Naive thymus-derived CD4-positive, alpha-beta T cell (primary cell): ENCODE measurements at regions of chr1 and their contacts with region 1.

Region 1: DNA sequence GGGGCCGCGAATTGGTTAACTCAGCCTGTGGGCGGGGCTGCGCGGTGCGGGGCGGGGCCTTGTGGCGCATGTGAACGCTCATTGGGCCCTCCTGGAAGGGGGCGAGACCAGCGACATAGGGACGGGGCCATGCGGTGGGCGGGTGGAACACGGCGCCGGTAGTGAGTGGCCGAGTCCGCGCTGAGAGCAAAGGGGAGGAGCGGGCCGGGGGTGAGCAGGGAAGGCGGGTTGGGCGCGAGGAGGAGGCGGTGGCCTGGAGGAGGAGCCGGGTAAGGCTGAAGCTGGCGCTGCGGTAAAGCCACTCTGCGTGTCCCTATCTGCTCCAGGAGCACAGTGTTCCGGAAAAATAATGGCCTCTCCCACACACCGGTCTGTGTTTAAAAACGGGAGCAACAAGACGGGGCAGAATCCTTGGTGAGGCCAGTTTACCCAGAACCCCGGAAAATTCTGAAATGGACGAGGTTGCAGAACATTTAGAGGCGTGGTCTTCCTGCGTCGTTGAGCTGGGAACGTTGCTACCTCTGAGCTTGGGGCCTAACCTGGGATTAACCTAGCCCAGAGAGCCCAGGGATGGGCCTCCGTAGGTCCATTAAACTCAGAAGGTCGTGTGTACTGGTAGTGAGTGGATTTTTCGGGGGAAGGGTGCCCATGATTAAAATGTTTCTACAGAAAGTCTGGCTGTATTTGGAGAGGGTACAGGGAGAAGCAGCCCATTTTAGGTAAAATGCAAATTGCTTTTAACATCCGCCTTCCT is 533 bp upstream of the CTNNBIP1 start:
- DNase-seq: peak; percentile 99 to 100 (median 100)
- ATAC-seq: peak; percentile 95
- H3K4me3 ChIP-seq: peak overlapping the region; percentile 89
- H3K4me3 Mint-ChIP-seq: peak overlapping the region; percentile 88 to 98 (median 96)
- H3K27ac ChIP-seq: peak overlapping the region; percentile 75
- H3K27ac Mint-ChIP-seq: peak overlapping the region; percentile 84 to 98 (median 97)
- H3K4me1 ChIP-seq: peaks cover 13 to 15% of the 10 kb centered on the region in 2 donors
- H3K4me1 Mint-ChIP-seq: peaks cover 25 to 43% (median 31%) of the 10 kb centered on the region in 7 donors
- H3K27me3 ChIP-seq: no peaks in the 10 kb centered on the region
- H3K27me3 Mint-ChIP-seq: peaks cover 0 to 10% (median 0%) of the 10 kb centered on the region in 5 donors

Region 2: DNA sequence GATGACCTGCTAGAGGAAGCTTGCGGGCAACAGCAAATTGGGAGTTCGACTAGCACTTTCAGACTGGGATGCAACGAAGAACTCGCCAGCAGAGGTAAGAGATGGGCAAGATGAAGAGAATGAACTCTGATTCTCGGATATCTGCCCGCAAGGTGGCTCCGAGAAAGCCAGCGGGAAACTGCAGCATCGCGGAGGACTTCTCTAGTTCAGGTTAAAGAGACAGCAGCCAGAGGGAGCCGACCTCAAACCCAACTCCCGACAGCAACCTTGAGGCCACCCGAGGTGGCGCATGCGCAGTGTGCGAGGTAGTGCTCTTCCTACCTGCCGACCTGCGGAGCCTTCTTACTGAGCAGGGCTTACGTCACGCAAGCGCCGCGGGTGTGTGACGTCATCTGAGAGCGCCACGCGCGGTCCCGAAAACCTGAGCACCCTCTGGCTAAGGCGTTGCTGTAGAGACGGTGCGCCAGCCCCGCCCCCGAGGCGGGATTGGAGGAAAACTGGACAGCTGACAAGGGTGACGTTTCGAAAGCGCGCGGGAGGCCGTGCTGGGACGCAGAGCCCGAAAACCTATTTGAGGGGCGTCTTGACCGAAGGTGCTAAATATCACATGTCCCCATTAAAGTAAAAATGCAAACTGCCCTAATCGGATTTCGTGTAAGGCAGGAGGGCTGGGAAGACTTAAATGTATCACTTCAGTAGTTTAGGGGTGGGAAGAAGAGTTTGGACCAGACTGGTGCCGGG is 481.8 kb before region 1 on chr1:
- CTCF ChIA-PET with region 1: no interaction called
- POLR2A ChIA-PET with region 1: no interaction called
- intact Hi-C with region 1: loop called in 1 of 2 experiments (anchors 2 kb)
- DNase-seq: peak; percentile 96 to 100 (median 99)
- ATAC-seq: peak; percentile 90
- H3K4me3 ChIP-seq: peak overlapping the region; percentile 80
- H3K4me3 Mint-ChIP-seq: peak overlapping the region; percentile 80 to 100 (median 96)
- H3K27ac ChIP-seq: peak overlapping the region; percentile 88
- H3K27ac Mint-ChIP-seq: peak overlapping the region; percentile 92 to 100 (median 98)
- H3K4me1 ChIP-seq: peaks cover 28 to 42% of the 10 kb centered on the region in 2 donors
- H3K4me1 Mint-ChIP-seq: peaks cover 34 to 64% (median 56%) of the 10 kb centered on the region in 7 donors
- H3K27me3 ChIP-seq: no peaks in the 10 kb centered on the region
- H3K27me3 Mint-ChIP-seq: peaks cover 0 to 21% (median 0%) of the 10 kb centered on the region in 5 donors

Region 3: DNA sequence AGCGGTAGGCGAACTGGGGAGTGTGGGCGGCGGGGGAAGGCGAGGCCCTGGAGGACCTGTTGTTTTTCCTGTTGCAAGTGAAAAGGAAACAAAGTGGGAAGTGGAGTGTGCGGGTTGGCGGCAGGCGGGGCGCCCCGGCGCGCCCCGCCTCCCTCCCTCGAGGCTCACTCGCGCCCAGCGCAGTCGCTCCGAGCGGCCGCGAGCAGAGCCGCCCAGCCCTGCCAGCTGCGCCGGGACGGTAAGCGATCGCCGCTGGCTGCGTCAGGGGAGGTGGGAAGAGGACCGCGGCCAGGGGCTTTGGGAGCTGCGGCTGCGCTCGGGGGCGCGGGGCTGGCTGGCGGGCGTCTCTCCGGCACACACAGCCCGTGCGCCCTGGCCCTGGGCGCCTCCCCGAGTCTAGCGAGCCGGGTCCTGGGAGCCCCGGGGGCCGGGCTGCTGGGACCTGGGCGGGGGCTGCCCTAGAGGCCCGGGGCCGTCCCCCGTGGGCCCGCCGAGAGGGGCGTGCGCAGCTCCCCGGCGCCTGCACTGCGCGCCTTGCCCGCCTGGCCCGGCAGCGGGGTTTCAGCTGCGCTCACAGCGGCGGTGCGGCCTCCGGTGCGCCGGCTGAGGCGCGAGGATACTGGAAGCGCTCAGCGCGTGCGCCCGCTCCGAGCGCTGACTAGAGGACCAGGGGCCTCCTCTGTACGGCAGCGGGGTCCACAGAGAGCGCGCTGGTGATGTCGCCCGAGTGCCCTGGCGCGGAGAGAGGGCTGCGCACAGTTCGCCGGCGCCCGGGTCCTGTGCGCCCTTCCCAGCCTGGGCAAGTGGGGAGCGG is 258.8 kb before region 1 on chr1 and contains the start of gene PIK3CD:
- CTCF ChIA-PET with region 1: no interaction called
- POLR2A ChIA-PET with region 1: interaction called, 3 read pairs
- intact Hi-C with region 1: loop called in 1 of 2 experiments (anchors 1 kb)
- DNase-seq: peak in 6 of 9 donors; percentile 14 to 59 (median 32)
- ATAC-seq: peak; percentile 49
- H3K4me3 ChIP-seq: peak within 1 kb of the TSS; percentile 84
- H3K4me3 Mint-ChIP-seq: peak within 1 kb of the TSS; percentile 96 to 100 (median 99)
- H3K27ac ChIP-seq: peak within 1 kb of the TSS; percentile 79
- H3K27ac Mint-ChIP-seq: peak within 1 kb of the TSS; percentile 95 to 99 (median 98)
- H3K4me1 ChIP-seq: peaks cover 27 to 46% of the 10 kb centered on the region in 2 donors
- H3K4me1 Mint-ChIP-seq: peaks cover 26 to 70% (median 61%) of the 10 kb centered on the region in 7 donors
- H3K27me3 ChIP-seq: no peaks in the 10 kb centered on the region
- H3K27me3 Mint-ChIP-seq: no peaks in the 10 kb centered on the region
- total RNA-seq, gene PIK3CD: 269 to 313 (median 283) TPM

Region 4: DNA sequence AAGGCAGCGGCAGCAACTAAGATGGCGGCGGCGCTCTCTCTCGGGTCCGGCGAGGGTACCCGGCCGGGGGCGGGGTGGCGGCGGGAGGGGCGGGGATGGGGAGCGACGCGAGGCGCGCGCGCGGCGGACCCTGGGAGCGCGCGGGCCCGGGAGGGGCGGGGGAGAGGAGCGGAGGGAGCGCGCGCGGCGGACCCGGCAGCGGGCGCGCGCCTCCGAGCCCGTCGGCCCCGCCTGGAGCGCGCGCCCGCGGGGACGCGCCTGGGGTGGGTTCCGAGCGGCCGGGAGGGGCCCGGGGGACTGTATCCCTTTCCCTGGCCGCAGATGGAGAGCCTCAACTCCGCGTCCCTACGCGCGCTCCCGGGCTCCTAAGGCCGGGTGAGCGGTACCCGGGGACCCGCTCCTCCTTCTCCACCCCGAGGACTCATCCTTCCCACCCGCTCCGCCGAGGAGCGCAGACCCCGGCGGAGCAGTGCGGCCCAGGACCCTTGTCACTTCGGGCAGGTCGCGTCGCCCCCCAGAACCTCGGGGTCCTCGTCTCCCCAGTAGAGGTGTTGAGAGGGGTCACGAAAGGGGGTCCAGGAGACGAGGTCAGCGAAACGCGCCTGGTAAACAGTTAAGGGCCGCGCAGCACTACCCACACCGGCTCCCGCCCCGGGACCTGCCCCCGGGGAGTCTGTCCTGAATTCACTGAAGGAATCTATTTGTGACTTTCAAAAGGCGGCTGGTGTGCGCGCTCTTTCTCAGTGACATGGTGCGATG is 86.5 kb before region 1 on chr1 and contains the start of gene CLSTN1:
- CTCF ChIA-PET with region 1: no interaction called
- POLR2A ChIA-PET with region 1: no interaction called
- intact Hi-C with region 1: loop called in 1 of 2 experiments (anchors 1 kb)
- DNase-seq: peak; percentile 73 to 88 (median 84)
- ATAC-seq: peak; percentile 86
- H3K4me3 ChIP-seq: peak within 1 kb of the TSS; percentile 82
- H3K4me3 Mint-ChIP-seq: peak within 1 kb of the TSS; percentile 95 to 99 (median 98)
- H3K27ac ChIP-seq: peak within 1 kb of the TSS; percentile 68
- H3K27ac Mint-ChIP-seq: peak within 1 kb of the TSS; percentile 80 to 97 (median 93)
- H3K4me1 ChIP-seq: peaks cover 24 to 34% of the 10 kb centered on the region in 2 donors
- H3K4me1 Mint-ChIP-seq: peaks cover 31 to 52% (median 46%) of the 10 kb centered on the region in 7 donors
- H3K27me3 ChIP-seq: no peaks in the 10 kb centered on the region
- H3K27me3 Mint-ChIP-seq: peaks cover 0 to 3% (median 0%) of the 10 kb centered on the region in 5 donors
- total RNA-seq, gene CLSTN1: 68.6 to 116 (median 85.6) TPM

Region 5: DNA sequence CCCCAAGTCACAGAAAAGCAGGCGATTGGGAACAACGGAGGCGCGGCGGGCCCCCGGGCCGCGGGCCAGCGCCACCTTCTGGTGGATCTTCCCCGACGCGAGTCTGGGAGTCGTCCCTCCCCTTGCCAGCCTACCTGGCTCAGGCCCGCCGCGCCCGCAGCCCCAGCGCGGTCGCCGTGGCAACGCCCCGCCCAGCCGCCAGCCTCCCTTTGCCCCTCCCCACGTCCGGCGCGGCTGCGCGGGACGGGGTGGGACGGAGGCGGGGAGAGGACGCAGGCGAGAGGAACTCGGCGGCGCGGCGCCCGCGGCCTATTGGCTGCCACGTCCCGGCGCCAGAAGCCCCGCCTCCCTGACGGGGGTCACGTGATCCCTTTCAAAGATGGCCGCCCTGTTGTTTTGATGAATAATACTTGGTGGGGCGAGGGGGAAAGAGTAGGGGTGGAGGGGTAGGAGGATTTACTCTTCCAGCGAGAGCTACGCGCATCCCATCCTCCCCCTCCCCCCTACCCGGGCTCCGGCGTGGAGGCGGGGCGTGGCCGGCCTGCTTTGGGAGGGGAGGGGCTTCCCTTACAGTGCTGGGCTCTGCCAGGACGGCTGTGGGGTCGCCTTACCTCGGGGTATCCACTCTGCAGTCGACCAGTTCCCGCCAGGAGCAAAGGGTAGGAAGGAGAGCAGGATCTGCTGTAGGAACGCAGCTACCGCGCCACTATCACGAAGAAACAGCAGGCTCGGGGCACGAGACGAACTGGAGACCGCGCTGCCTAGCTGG is 122.2 kb after region 1 on chr1 and contains the start of gene UBE4B:
- CTCF ChIA-PET with region 1: no interaction called
- POLR2A ChIA-PET with region 1: interaction called, 6 read pairs
- intact Hi-C with region 1: loop called (anchors 1 kb)
- DNase-seq: peak; percentile 98 to 100 (median 99)
- ATAC-seq: peak; percentile 97
- H3K4me3 ChIP-seq: peak within 1 kb of the TSS; percentile 96
- H3K4me3 Mint-ChIP-seq: peak within 1 kb of the TSS; percentile 79 to 98 (median 96)
- H3K27ac ChIP-seq: peak within 1 kb of the TSS; percentile 94
- H3K27ac Mint-ChIP-seq: peak within 1 kb of the TSS; percentile 91 to 98 (median 97)
- H3K4me1 ChIP-seq: peaks cover 14 to 15% of the 10 kb centered on the region in 2 donors
- H3K4me1 Mint-ChIP-seq: peaks cover 20 to 34% (median 28%) of the 10 kb centered on the region in 7 donors
- H3K27me3 ChIP-seq: no peaks in the 10 kb centered on the region
- H3K27me3 Mint-ChIP-seq: no peaks in the 10 kb centered on the region
- total RNA-seq, gene UBE4B: 37.9 to 48.3 (median 39.3) TPM

Region 6: DNA sequence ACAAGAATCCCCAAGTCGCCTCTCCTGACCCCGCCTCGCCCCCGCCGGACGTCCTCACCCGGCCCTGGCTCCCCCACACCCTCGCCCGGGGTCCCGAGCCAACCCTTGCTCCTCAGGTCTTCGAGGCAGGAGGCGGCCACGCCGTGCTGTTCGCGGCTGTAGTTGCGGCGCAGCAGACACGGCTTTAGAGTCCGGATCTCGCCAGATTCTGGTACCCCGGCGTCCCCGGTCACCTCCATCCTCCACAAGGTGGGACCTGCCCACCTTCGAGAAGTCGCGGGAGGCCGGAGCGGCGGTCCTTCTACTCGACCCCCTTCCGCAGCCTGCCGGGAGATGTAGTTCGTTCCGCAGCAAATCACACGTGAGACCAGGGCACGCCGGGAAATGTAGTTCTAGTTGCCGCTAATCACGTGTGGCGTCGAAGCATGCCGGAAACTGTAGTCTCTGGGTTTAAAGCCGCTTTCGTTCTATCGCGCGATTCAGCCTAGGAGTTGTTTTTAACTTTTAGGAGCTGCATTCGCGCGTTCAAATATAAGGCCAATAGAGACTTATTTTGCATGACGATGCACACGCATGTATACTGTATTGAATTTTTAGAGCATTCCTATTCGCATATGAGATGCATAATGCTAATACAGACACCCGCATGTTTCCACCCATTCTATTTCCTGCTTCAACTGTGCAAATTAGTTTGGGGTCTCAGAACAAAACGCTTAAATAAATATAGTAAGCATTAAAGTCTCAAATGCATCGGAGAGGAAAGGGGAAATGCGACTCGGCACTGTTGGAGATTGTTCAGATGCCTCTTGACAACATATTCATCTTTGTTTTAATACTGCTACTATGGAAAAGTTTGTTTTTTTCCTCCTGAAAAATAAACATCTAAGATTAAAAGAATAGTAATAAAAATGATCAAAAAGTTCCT is 561.9 kb after region 1 on chr1 and contains the start of gene DFFA:
- CTCF ChIA-PET with region 1: no interaction called
- POLR2A ChIA-PET with region 1: no interaction called
- intact Hi-C with region 1: loop called in 1 of 2 experiments (anchors 1 kb)
- DNase-seq: peak; percentile 68 to 95 (median 87)
- ATAC-seq: peak; percentile 90
- H3K4me3 ChIP-seq: peak within 1 kb of the TSS; percentile 69
- H3K4me3 Mint-ChIP-seq: peak within 1 kb of the TSS; percentile 87 to 96 (median 92)
- H3K27ac ChIP-seq: peak within 1 kb of the TSS; percentile 68
- H3K27ac Mint-ChIP-seq: peak within 1 kb of the TSS; percentile 78 to 93 (median 90)
- H3K4me1 ChIP-seq: peaks cover 21 to 37% of the 10 kb centered on the region in 2 donors
- H3K4me1 Mint-ChIP-seq: peaks cover 12 to 58% (median 49%) of the 10 kb centered on the region in 7 donors
- H3K27me3 ChIP-seq: no peaks in the 10 kb centered on the region
- H3K27me3 Mint-ChIP-seq: no peaks in the 10 kb centered on the region
- total RNA-seq, gene DFFA: 13.5 to 36.0 (median 23.4) TPM